Activated T-helper 1 cell treated with anti-CD3 and anti-CD28 coated beads, Interleukin-12 subunit alpha, Interleukin-12 subunit beta, Interleukin-2, Interleukin-4 antibody, amounts not matched to agents 30 ng/mL and 10 ng/mL and 1 ng/mL, durations not matched to agents 14 hours and 24 hours and 36 hours (primary cell): ENCODE measurements at regions of chr9 and their contacts with region 1.

Region 1: GRCh38 chr9:75088260-75088905 is at the start of gene OSTF1:
- DNase-seq: peak; percentile 95
- H3K4me3 Mint-ChIP-seq: peak within 1 kb of the TSS; percentile 99
- H3K27ac Mint-ChIP-seq: peak within 1 kb of the TSS; percentile 97
- H3K4me1 Mint-ChIP-seq: peaks cover 64% of the 10 kb centered on the region
- H3K27me3 Mint-ChIP-seq: no peaks in the 10 kb centered on the region
- total RNA-seq, gene OSTF1: 49.5 and 53.6 TPM in 2 replicates

Region 2: DNA sequence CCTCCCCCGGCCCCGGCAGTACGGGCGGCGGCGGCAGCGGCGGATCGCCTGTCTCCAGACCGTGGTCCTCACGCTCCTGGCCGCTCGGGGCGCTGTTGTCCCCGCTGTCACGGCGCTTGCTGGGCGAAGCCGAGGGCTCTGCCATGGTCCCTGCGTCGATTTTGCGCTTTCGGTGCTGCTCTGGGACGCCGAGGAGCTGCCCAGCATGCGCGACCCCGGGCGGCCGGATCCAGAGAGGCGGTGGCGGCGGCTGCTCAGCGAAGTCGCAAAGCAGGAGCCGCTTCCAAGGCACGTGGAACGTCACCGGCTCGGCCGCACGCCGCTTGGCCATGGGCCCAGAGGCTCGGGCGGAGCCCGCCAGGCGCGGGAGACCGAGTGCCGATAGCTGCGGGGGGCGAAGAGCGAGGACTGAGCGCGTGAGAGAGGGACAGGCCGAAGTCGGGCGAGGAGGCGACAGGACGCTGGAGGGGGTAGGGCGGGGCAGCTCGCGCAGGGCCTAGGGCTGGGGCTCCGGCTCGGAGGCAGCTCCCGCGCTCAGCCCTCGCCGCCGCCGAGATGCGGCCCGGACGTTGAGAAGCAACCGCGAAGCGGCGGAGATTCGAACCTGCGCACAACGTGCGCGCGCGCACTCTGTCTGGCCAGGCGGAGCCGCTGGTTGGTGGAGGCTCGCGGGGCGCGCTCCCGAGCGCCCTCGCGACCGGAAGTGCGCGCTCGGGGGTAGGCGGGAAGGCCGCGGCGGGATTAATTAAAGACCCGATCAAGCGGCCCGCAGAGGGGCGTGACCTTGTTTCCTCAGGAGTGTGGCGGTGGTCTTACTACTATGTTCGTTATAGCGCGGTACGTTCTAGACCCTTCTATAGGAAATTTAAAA is 135.9 kb before region 1 on chr9 and contains the start of gene C9orf40:
- intact Hi-C with region 1: loop called (anchors 1 kb)
- DNase-seq: peak; percentile 86
- H3K4me3 Mint-ChIP-seq: peak within 1 kb of the TSS; percentile 98
- H3K27ac Mint-ChIP-seq: peak within 1 kb of the TSS; percentile 99
- H3K4me1 Mint-ChIP-seq: peaks cover 44% of the 10 kb centered on the region
- H3K27me3 Mint-ChIP-seq: no peaks in the 10 kb centered on the region
- total RNA-seq, gene C9orf40: 18.1 and 18.3 TPM in 2 replicates

Region 3: GRCh38 chr9:75116306-75116705 is 27.9 kb after region 1 on chr9:
- intact Hi-C with region 1: loop called (anchors 2 kb)
- DNase-seq: no peak
- H3K4me3 Mint-ChIP-seq: no peak overlapping the region
- H3K27ac Mint-ChIP-seq: no peak overlapping the region
- H3K4me1 Mint-ChIP-seq: peaks cover 50% of the 10 kb centered on the region
- H3K27me3 Mint-ChIP-seq: no peaks in the 10 kb centered on the region

Region 4: GRCh38 chr9:75148561-75148960 is 60.2 kb after region 1 on chr9:
- intact Hi-C with region 1: loop called (anchors 1 kb)
- DNase-seq: peak; percentile 37
- H3K4me3 Mint-ChIP-seq: peak overlapping the region; percentile 62
- H3K27ac Mint-ChIP-seq: peak overlapping the region; percentile 87
- H3K4me1 Mint-ChIP-seq: peaks cover 79% of the 10 kb centered on the region
- H3K27me3 Mint-ChIP-seq: no peaks in the 10 kb centered on the region

Region 5: GRCh38 chr9:75185585-75186170 is 97.3 kb after region 1 on chr9:
- intact Hi-C with region 1: loop called (anchors 1 kb)
- DNase-seq: peak; percentile 11
- H3K4me3 Mint-ChIP-seq: no peak overlapping the region
- H3K27ac Mint-ChIP-seq: no peak overlapping the region
- H3K4me1 Mint-ChIP-seq: peaks cover 27% of the 10 kb centered on the region
- H3K27me3 Mint-ChIP-seq: no peaks in the 10 kb centered on the region

Region 6: GRCh38 chr9:75378036-75378435 is 289.7 kb after region 1 on chr9:
- intact Hi-C with region 1: no loop called
- DNase-seq: no peak
- H3K4me3 Mint-ChIP-seq: no peak overlapping the region
- H3K27ac Mint-ChIP-seq: no peak overlapping the region
- H3K4me1 Mint-ChIP-seq: no peaks in the 10 kb centered on the region
- H3K27me3 Mint-ChIP-seq: no peaks in the 10 kb centered on the region

Region 7: DNA sequence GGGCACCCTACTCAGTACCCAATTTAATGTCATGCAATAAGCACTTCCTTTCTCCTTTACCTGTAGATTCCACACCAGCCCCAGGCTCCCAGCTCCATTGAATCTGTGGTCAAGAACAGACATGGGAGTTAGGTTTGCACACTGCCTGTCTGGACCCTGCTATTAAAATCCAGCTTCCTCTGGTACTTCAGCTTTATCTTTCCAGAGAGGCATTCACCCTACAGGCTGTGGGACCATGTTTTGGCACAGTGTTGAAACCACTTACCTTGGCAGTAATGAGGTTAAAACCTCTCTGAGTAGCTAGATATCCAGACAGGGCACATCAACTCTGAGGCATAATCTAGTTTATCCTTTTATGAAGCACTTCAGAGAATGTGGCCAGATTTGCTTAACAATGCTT is 610.6 kb after region 1 on chr9:
- intact Hi-C with region 1: no loop called
- DNase-seq: no peak
- H3K4me3 Mint-ChIP-seq: no peak overlapping the region
- H3K27ac Mint-ChIP-seq: no peak overlapping the region
- H3K4me1 Mint-ChIP-seq: no peaks in the 10 kb centered on the region
- H3K27me3 Mint-ChIP-seq: peaks cover 3% of the 10 kb centered on the region

Region 8: DNA sequence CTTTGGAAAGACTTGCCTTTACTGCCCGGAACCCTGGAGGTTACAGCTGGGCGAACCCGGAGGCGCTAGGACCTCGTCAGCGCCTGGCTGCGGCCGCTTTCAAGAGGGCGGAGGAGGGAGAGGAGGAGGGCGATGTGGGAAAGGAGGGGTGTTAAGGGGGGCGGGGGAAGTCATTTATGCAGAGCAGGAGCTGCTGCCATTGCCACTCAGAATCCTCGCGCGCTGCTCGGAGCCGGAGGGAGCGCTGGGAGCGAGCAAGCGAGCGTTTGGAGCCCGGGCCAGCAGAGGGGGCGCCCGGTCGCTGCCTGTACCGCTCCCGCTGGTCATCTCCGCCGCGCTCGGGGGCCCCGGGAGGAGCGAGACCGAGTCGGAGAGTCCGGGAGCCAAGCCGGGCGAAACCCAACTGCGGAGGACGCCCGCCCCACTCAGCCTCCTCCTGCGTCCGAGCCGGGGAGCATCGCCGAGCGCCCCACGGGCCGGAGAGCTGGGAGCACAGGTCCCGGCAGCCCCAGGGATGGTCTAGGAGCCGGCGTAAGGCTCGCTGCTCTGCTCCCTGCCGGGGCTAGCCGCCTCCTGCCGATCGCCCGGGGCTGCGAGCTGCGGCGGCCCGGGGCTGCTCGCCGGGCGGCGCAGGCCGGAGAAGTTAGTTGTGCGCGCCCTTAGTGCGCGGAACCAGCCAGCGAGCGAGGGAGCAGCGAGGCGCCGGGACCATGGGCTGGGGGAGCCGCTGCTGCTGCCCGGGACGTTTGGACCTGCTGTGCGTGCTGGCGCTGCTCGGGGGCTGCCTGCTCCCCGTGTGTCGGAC is 802.3 kb after region 1 on chr9 and contains the start of gene PCSK5:
- intact Hi-C with region 1: loop called (anchors 2 kb)
- DNase-seq: peak; percentile 81
- H3K4me3 Mint-ChIP-seq: peak within 1 kb of the TSS; percentile 91
- H3K27ac Mint-ChIP-seq: peak within 1 kb of the TSS; percentile 76
- H3K4me1 Mint-ChIP-seq: peaks cover 35% of the 10 kb centered on the region
- H3K27me3 Mint-ChIP-seq: peaks cover 37% of the 10 kb centered on the region
- total RNA-seq, gene PCSK5: 3.3 and 3.7 TPM in 2 replicates